ENCODE measurements at regions of chr5 and their contacts with region 1.

Region 1: GRCh38 chr5:88690409-88691229 is 192.4 kb downstream of the MEF2C start:
- DNase-seq: peak; percentile 50
- ATAC-seq: peak; percentile 91
- H3K4me3 ChIP-seq: no peak overlapping the region
- H3K27ac ChIP-seq: no peak overlapping the region
- H3K4me1 ChIP-seq: peaks cover 3% of the 10 kb centered on the region; the same call in 1 of the 2 replicates
- H3K27me3 ChIP-seq: peaks cover 95% of the 10 kb centered on the region
- CTCF ChIP-seq: peak; percentile 81
- POLR2A ChIP-seq: no peak
- RAD21 ChIP-seq: peak; percentile 79

Region 2: GRCh38 chr5:87421307-87421706 is 1269.3 kb before region 1 on chr5:
- CTCF ChIA-PET with region 1: interaction called, 3 read pairs
- POLR2A ChIA-PET with region 1: no interaction called
- dilution Hi-C with region 1: no loop called
- in situ Hi-C with region 1: loop called (anchors 10 kb)
- intact Hi-C with region 1: loop called (anchors 5 kb)
- DNase-seq: no peak
- ATAC-seq: no peak
- H3K4me3 ChIP-seq: no peak overlapping the region
- H3K27ac ChIP-seq: no peak overlapping the region
- H3K4me1 ChIP-seq: no peaks in the 10 kb centered on the region
- H3K27me3 ChIP-seq: no peaks in the 10 kb centered on the region
- CTCF ChIP-seq: no peak
- POLR2A ChIP-seq: no peak
- RAD21 ChIP-seq: no peak

Region 3: GRCh38 chr5:87650284-87650683 is 1040.3 kb before region 1 on chr5:
- CTCF ChIA-PET with region 1: no interaction called
- POLR2A ChIA-PET with region 1: no interaction called
- dilution Hi-C with region 1: no loop called
- in situ Hi-C with region 1: no loop called
- intact Hi-C with region 1: no loop called
- DNase-seq: no peak
- ATAC-seq: no peak
- H3K4me3 ChIP-seq: no peak overlapping the region
- H3K27ac ChIP-seq: no peak overlapping the region
- H3K4me1 ChIP-seq: no peaks in the 10 kb centered on the region
- H3K27me3 ChIP-seq: no peaks in the 10 kb centered on the region
- CTCF ChIP-seq: no peak
- POLR2A ChIP-seq: no peak
- RAD21 ChIP-seq: no peak

Region 4: GRCh38 chr5:88140856-88141752 is 549.5 kb before region 1 on chr5:
- CTCF ChIA-PET with region 1: interaction called, 3 read pairs
- POLR2A ChIA-PET with region 1: no interaction called
- dilution Hi-C with region 1: no loop called
- in situ Hi-C with region 1: loop called (anchors 5 kb)
- intact Hi-C with region 1: loop called (anchors 2 kb)
- DNase-seq: peak; percentile 93
- ATAC-seq: peak; percentile 97
- H3K4me3 ChIP-seq: peak overlapping the region; percentile 44
- H3K27ac ChIP-seq: no peak overlapping the region
- H3K4me1 ChIP-seq: no peaks in the 10 kb centered on the region
- H3K27me3 ChIP-seq: peaks cover 50% of the 10 kb centered on the region
- CTCF ChIP-seq: peak; percentile 68
- POLR2A ChIP-seq: no peak
- RAD21 ChIP-seq: peak; percentile 38

Region 5: GRCh38 chr5:88355490-88356050 is 335.0 kb before region 1 on chr5:
- CTCF ChIA-PET with region 1: no interaction called
- POLR2A ChIA-PET with region 1: no interaction called
- dilution Hi-C with region 1: no loop called
- in situ Hi-C with region 1: no loop called
- intact Hi-C with region 1: no loop called
- DNase-seq: no peak
- ATAC-seq: no peak
- H3K4me3 ChIP-seq: no peak overlapping the region
- H3K27ac ChIP-seq: no peak overlapping the region
- H3K4me1 ChIP-seq: no peaks in the 10 kb centered on the region
- H3K27me3 ChIP-seq: no peaks in the 10 kb centered on the region
- CTCF ChIP-seq: no peak
- POLR2A ChIP-seq: no peak
- RAD21 ChIP-seq: no peak

Region 6: GRCh38 chr5:88680253-88681132 is 10.1 kb before region 1 on chr5:
- CTCF ChIA-PET with region 1: interaction called, 26 read pairs
- POLR2A ChIA-PET with region 1: no interaction called
- dilution Hi-C with region 1: no loop called
- in situ Hi-C with region 1: no loop called
- intact Hi-C with region 1: no loop called
- DNase-seq: peak; percentile 14
- ATAC-seq: peak; percentile 96
- H3K4me3 ChIP-seq: peak overlapping the region; percentile 32
- H3K27ac ChIP-seq: no peak overlapping the region
- H3K4me1 ChIP-seq: peaks cover 2% of the 10 kb centered on the region; the same call in 1 of the 2 replicates
- H3K27me3 ChIP-seq: peaks cover 77% of the 10 kb centered on the region
- CTCF ChIP-seq: peak; percentile 83
- POLR2A ChIP-seq: no peak
- RAD21 ChIP-seq: peak; percentile 77